ENCODE measurements at regions of chr1 and their contacts with region 1.

Region 1: GRCh38 chr1:109397538-109398342 is at the start of gene SORT1:
- DNase-seq: peak; percentile 83
- ATAC-seq: peak; percentile 96
- H3K4me3 ChIP-seq: peak within 1 kb of the TSS; percentile 78
- H3K27ac ChIP-seq: peak within 1 kb of the TSS; percentile 74
- H3K4me1 ChIP-seq: peaks cover 12% of the 10 kb centered on the region
- H3K27me3 ChIP-seq: no peaks in the 10 kb centered on the region
- CTCF ChIP-seq: no peak
- POLR2A ChIP-seq: 0 out of 2 replicates have a peak, but pooled peaks have one; percentile 30
- RAD21 ChIP-seq: no peak
- total RNA-seq, gene SORT1: 16.7 and 18.9 TPM in 2 replicates

Region 2: GRCh38 chr1:109263597-109264398 is 133.9 kb before region 1 on chr1:
- CTCF ChIA-PET with region 1: interaction called, 4 read pairs
- POLR2A ChIA-PET with region 1: no interaction called
- dilution Hi-C with region 1: no loop called
- in situ Hi-C with region 1: no loop called
- intact Hi-C with region 1: loop called (anchors 1 kb)
- DNase-seq: peak; percentile 79
- ATAC-seq: peak; percentile 97
- H3K4me3 ChIP-seq: no peak overlapping the region
- H3K27ac ChIP-seq: no peak overlapping the region
- H3K4me1 ChIP-seq: no peaks in the 10 kb centered on the region
- H3K27me3 ChIP-seq: no peaks in the 10 kb centered on the region
- CTCF ChIP-seq: peak; percentile 99
- POLR2A ChIP-seq: no peak
- RAD21 ChIP-seq: peak; percentile 89

Region 3: DNA sequence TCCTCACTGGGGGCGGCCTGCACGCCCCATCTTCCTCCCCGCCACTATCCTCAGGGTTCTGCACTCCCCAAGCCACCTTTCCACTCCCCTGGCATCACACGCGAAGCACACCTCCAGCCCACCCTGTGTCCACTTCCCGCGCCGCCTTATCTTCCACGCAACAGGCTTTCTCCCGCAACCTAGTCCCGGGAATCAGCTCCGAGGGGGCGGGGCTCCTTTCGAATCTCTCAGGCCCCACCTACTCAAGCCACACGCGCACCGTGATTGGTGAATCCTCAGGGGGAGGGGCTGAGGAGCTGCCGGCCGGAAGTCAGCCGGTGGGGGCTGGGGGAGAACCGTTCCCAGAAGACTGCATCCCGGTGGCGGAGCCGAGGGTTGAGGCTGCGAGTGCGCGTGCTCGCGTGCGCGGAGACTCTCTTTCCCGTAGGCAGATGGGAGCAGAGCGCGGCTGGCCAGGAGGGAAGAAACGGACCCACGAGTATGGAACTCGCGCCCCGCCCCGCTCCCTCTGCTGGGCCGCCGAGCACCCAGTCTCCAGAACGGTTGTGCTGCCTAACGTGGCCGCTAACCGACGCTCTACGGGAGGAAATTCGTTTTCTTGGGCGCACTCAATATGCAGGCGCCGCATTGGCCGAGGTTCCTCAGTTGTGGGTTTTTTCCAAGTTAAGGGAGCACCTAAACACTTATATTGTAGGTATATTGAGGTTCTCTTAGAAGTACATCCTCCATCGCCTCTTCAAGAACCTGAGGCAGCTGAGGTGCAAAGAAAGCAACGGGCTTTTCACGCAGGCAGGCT is 114.6 kb before region 1 on chr1 and contains the start of gene PSRC1:
- CTCF ChIA-PET with region 1: interaction called, 4 read pairs
- POLR2A ChIA-PET with region 1: interaction called, 4 read pairs
- dilution Hi-C with region 1: no loop called
- in situ Hi-C with region 1: loop called (anchors 5 kb)
- intact Hi-C with region 1: loop called (anchors 1 kb)
- DNase-seq: peak; percentile 96
- ATAC-seq: peak; percentile 97
- H3K4me3 ChIP-seq: peak within 1 kb of the TSS; percentile 63
- H3K27ac ChIP-seq: peak within 1 kb of the TSS; percentile 93
- H3K4me1 ChIP-seq: peaks cover 5% of the 10 kb centered on the region
- H3K27me3 ChIP-seq: no peaks in the 10 kb centered on the region
- CTCF ChIP-seq: peak; percentile 73
- POLR2A ChIP-seq: peak; percentile 60; the same call in 1 of the 2 replicates
- RAD21 ChIP-seq: peak; percentile 67
- total RNA-seq, gene PSRC1: 34.6 and 36.4 TPM in 2 replicates

Region 4: GRCh38 chr1:109341944-109342930 is 55.5 kb before region 1 on chr1:
- CTCF ChIA-PET with region 1: no interaction called
- POLR2A ChIA-PET with region 1: no interaction called
- dilution Hi-C with region 1: no loop called
- in situ Hi-C with region 1: no loop called
- intact Hi-C with region 1: loop called (anchors 1 kb)
- DNase-seq: no peak
- ATAC-seq: no peak
- H3K4me3 ChIP-seq: no peak overlapping the region
- H3K27ac ChIP-seq: no peak overlapping the region
- H3K4me1 ChIP-seq: no peaks in the 10 kb centered on the region
- H3K27me3 ChIP-seq: no peaks in the 10 kb centered on the region
- CTCF ChIP-seq: no peak
- POLR2A ChIP-seq: no peak
- RAD21 ChIP-seq: no peak

Region 5: GRCh38 chr1:109370712-109371455 is 26.9 kb before region 1 on chr1:
- CTCF ChIA-PET with region 1: no interaction called
- POLR2A ChIA-PET with region 1: no interaction called
- dilution Hi-C with region 1: no loop called
- in situ Hi-C with region 1: no loop called
- intact Hi-C with region 1: loop called (anchors 1 kb)
- DNase-seq: peak; percentile 97
- ATAC-seq: peak; percentile 86
- H3K4me3 ChIP-seq: peak overlapping the region; percentile 18; the same call in 1 of the 2 replicates
- H3K27ac ChIP-seq: peak overlapping the region; percentile 96
- H3K4me1 ChIP-seq: peaks cover 27% of the 10 kb centered on the region
- H3K27me3 ChIP-seq: no peaks in the 10 kb centered on the region
- CTCF ChIP-seq: no peak
- POLR2A ChIP-seq: peak; percentile 53
- RAD21 ChIP-seq: peak; percentile 7

Measured in IMR-90 (cell line).